H1 (cell line): ENCODE measurements at regions of chr13 and their contacts with region 1.

Region 1: GRCh38 chr13:48037346-48038173 is at the start of gene NUDT15:
- DNase-seq: peak; percentile 93 to 96
- H3K4me3 ChIP-seq: peak within 1 kb of the TSS; percentile 62 to 85 (median 70)
- H3K27ac ChIP-seq: peak within 1 kb of the TSS; percentile 96
- H3K4me1 ChIP-seq: peaks cover 0 to 4% (median 2%) of the 10 kb centered on the region in 4 experiments; a peak in 3 of 7 replicates
- H3K27me3 ChIP-seq: no peaks in the 10 kb centered on the region
- CTCF ChIP-seq: peak; percentile 94 to 98 (median 98)
- EP300 ChIP-seq: peak; percentile 23 to 72; a peak in 2 of 3 replicates
- POLR2A ChIP-seq: peak; percentile 90 to 99
- RAD21 ChIP-seq: peak; percentile 49 to 64
- total RNA-seq, gene NUDT15: 64.3 and 65.9 TPM in 2 replicates

Region 2: GRCh38 chr13:47794963-47795362 is 242.6 kb before region 1 on chr13:
- CTCF ChIA-PET with region 1: interaction called, 10 read pairs
- POLR2A ChIA-PET with region 1: interaction called, 7 read pairs
- DNase-seq: no peak
- H3K4me3 ChIP-seq: no peak overlapping the region
- H3K27ac ChIP-seq: no peak overlapping the region
- H3K4me1 ChIP-seq: no peaks in the 10 kb centered on the region
- H3K27me3 ChIP-seq: no peaks in the 10 kb centered on the region
- CTCF ChIP-seq: peak; percentile 30 to 55 (median 41); a peak in 3 of 4 replicates
- EP300 ChIP-seq: no peak
- POLR2A ChIP-seq: no peak
- RAD21 ChIP-seq: peak; percentile 41 to 57; a peak in 3 of 4 replicates

Region 3: DNA sequence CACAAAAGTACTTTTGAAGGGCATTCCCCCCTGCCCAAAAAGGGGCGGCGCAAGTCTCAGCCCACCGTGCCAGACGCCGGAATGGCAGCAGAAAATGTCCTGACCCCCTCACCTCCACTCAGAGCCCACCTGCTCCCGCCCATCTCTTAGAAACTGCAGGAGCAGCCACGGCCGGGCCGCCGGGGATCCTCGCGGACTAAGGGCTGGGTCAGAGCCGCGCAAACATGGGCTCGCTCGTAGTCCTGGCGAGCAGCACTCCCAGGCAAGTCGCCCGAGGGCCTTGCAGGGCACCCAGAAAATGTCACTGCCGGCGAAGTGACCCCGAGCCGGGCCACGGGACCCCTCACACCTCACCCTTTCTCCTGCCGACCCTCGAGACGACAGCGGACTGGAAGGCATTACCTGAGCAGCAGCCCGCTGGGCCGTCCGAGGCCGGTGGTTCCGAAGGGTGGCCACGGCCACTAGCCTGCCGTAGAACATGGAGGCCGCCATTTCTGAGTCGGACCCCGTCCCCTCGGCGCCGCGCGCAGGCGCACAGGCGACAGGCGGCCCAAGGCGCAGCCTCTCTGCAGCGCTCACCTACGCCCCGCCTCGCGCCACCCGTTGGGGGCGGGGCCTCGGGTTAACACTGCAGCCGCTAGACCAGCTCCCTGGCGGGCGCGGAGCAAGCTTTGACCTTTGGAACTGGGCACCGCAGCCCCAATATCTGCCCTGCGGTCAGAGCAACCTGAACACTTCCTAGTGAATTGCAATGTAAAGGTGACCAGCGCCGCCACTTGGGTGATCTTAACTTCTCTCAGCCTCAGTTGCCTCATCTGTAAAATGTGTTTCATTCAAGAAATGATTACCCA is 36.6 kb before region 1 on chr13 and contains the start of gene SUCLA2:
- CTCF ChIA-PET with region 1: interaction called, 13 read pairs
- POLR2A ChIA-PET with region 1: interaction called, 43 read pairs
- DNase-seq: peak; percentile 81 to 95
- H3K4me3 ChIP-seq: peak within 1 kb of the TSS; percentile 95 to 97 (median 96)
- H3K27ac ChIP-seq: peak within 1 kb of the TSS; percentile 71
- H3K4me1 ChIP-seq: peaks cover 0 to 4% (median 0%) of the 10 kb centered on the region in 4 experiments; a peak in 3 of 7 replicates
- H3K27me3 ChIP-seq: no peaks in the 10 kb centered on the region
- CTCF ChIP-seq: no peak
- EP300 ChIP-seq: no peak
- POLR2A ChIP-seq: peak; percentile 57 to 86
- RAD21 ChIP-seq: peak in 1 of 2 experiments; percentile 6; a peak in 1 of 4 replicates
- total RNA-seq, gene SUCLA2: 69.1 and 78.8 TPM in 2 replicates

Region 4: DNA sequence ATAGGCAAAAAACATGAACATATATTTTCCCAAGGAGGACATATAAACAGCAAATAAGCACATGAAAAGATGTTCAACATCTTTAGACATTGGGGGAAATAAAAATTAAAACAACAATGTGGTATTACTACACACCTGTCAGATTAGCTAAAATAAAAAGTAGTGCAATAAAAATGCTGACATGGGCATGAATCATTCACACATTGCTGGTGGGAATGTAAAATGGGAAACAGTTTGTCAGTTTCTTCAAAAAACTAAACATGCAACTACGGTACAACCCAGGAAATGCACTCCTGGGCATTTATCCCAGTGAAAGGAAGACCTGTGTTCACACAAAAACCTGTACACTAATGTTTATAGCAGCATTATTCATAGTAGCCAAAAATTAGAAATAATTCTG is 31.2 kb before region 1 on chr13:
- CTCF ChIA-PET with region 1: interaction called, 13 read pairs
- POLR2A ChIA-PET with region 1: interaction called, 43 read pairs
- DNase-seq: no peak
- H3K4me3 ChIP-seq: no peak overlapping the region
- H3K27ac ChIP-seq: no peak overlapping the region
- H3K4me1 ChIP-seq: peaks cover 0 to 4% (median 1%) of the 10 kb centered on the region in 4 experiments; a peak in 3 of 7 replicates
- H3K27me3 ChIP-seq: no peaks in the 10 kb centered on the region
- CTCF ChIP-seq: no peak
- EP300 ChIP-seq: no peak
- POLR2A ChIP-seq: no peak
- RAD21 ChIP-seq: no peak

Region 5: GRCh38 chr13:48014359-48014758 is 23.2 kb before region 1 on chr13:
- CTCF ChIA-PET with region 1: interaction called, 6 read pairs
- POLR2A ChIA-PET with region 1: interaction called, 16 read pairs
- DNase-seq: no peak
- H3K4me3 ChIP-seq: no peak overlapping the region
- H3K27ac ChIP-seq: no peak overlapping the region
- H3K4me1 ChIP-seq: peaks cover 0 to 2% (median 1%) of the 10 kb centered on the region in 4 experiments; a peak in 2 of 7 replicates
- H3K27me3 ChIP-seq: no peaks in the 10 kb centered on the region
- CTCF ChIP-seq: no peak
- EP300 ChIP-seq: no peak
- POLR2A ChIP-seq: no peak
- RAD21 ChIP-seq: no peak

Region 6: GRCh38 chr13:48050550-48050949 is 13.0 kb after region 1 on chr13:
- CTCF ChIA-PET with region 1: interaction called, 50 read pairs
- POLR2A ChIA-PET with region 1: interaction called, 48 read pairs
- DNase-seq: no peak
- H3K4me3 ChIP-seq: no peak overlapping the region
- H3K27ac ChIP-seq: no peak overlapping the region
- H3K4me1 ChIP-seq: no peaks in the 10 kb centered on the region
- H3K27me3 ChIP-seq: no peaks in the 10 kb centered on the region
- CTCF ChIP-seq: no peak
- EP300 ChIP-seq: no peak
- POLR2A ChIP-seq: no peak
- RAD21 ChIP-seq: no peak

Region 7: GRCh38 chr13:48094781-48095502 is 57.4 kb after region 1 on chr13 and contains the start of gene MED4:
- CTCF ChIA-PET with region 1: interaction called, 10 read pairs
- POLR2A ChIA-PET with region 1: interaction called, 7 read pairs
- DNase-seq: peak; percentile 78 to 100
- H3K4me3 ChIP-seq: peak within 1 kb of the TSS; percentile 73 to 99 (median 92)
- H3K27ac ChIP-seq: peak within 1 kb of the TSS; percentile 88; the same call in 1 of the 2 replicates
- H3K4me1 ChIP-seq: peaks cover 0 to 7% (median 0%) of the 10 kb centered on the region in 4 experiments; a peak in 2 of 7 replicates
- H3K27me3 ChIP-seq: no peaks in the 10 kb centered on the region
- CTCF ChIP-seq: peak; percentile 97 to 99 (median 98)
- EP300 ChIP-seq: 0 out of 3 replicates have a peak, but pooled peaks of 1 of the 2 experiments have one; percentile 17
- POLR2A ChIP-seq: peak; percentile 95 to 97
- RAD21 ChIP-seq: peak; percentile 48 to 55
- total RNA-seq, gene MED4: 43.3 and 48.1 TPM in 2 replicates